ENCODE measurements at regions of chr17 and their contacts with region 1.

Region 1: DNA sequence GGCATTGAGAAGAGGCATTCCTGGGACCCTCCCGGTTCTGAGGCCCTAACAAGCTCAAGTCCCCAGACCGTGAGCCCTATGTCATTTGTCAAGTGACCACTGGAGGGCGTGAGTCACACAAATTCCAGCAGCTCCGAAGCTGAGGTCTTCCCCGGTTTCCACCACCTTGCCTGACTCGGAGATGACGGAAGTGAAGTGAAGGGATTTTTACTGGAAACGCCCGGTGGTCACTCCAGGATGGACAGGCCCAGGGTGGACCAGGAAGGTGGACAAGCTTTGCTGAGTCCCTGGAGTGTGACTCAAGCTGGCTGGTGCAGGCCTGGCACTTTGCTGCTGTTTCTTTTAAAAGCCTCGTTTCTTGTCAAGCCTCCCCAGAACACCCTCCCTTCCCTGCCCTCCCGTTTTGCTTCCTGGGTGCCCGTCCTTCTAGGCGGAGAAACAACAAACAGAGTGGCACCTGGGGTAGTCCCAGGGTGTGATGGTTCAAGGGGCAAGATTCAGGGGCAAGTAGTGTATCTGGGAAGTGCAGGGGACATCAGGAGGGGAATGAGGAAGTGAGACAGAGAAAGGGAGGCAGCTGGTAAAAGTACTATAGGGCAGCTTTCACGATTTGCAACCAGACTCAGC is 5.3 kb upstream of the NOS2 start:
- DNase-seq: peak; percentile 90
- H3K4me3 Mint-ChIP-seq: peak overlapping the region; percentile 66
- H3K27ac Mint-ChIP-seq: peak overlapping the region; percentile 68
- H3K4me1 Mint-ChIP-seq: peaks cover 43% of the 10 kb centered on the region
- H3K27me3 Mint-ChIP-seq: no peaks in the 10 kb centered on the region

Region 2: GRCh38 chr17:27473748-27474609 is 331.7 kb before region 1 on chr17:
- CTCF ChIA-PET with region 1: no interaction called
- POLR2A ChIA-PET with region 1: no interaction called
- intact Hi-C with region 1: loop called (anchors 5 kb)
- DNase-seq: peak; percentile 93
- H3K4me3 Mint-ChIP-seq: peak overlapping the region; percentile 42
- H3K27ac Mint-ChIP-seq: peak overlapping the region; percentile 98
- H3K4me1 Mint-ChIP-seq: peaks cover 94% of the 10 kb centered on the region
- H3K27me3 Mint-ChIP-seq: no peaks in the 10 kb centered on the region

Region 3: GRCh38 chr17:27552469-27552779 is 253.2 kb before region 1 on chr17:
- CTCF ChIA-PET with region 1: no interaction called
- POLR2A ChIA-PET with region 1: no interaction called
- intact Hi-C with region 1: no loop called
- DNase-seq: peak; percentile 36
- H3K4me3 Mint-ChIP-seq: no peak overlapping the region
- H3K27ac Mint-ChIP-seq: no peak overlapping the region
- H3K4me1 Mint-ChIP-seq: peaks cover 23% of the 10 kb centered on the region
- H3K27me3 Mint-ChIP-seq: no peaks in the 10 kb centered on the region

Region 4: DNA sequence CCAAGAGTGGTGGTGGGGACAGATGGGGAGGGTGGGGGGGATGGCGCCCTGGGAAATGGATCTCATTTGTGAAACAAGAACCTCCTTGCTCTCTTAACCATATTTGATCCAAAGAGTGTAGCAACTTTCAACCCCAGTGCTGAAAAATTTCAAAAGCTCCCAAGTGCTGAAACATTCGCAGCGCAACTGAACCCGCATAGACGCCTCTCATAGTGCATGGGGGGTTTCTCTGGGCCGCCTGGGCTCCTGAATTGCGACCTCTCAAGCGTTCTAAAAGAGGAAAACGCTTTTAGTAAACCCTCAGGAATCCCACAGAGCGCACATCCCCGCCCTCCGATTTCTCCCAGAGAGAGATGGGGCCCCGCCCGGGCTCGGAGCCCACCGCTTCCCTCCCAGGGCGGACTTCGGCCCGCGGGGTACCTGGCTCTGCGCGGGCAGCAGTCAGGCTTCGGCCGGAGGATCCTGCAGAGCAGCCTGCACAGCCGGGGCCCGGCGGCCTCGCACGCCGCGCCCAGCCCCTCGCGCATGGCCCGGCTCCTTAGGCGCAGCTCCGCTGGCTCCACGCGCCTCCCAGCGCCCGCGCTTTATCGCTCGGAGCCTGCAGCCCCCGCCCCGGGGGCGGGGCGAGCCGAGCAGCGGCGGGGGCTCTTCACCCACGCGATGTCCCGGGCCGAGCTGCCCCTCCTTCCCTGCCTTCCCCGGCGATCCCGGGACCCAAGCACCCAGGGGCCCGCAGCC is 12.3 kb before region 1 on chr17:
- CTCF ChIA-PET with region 1: interaction called, 24 read pairs
- POLR2A ChIA-PET with region 1: interaction called, 3 read pairs
- intact Hi-C with region 1: no loop called
- DNase-seq: no peak
- H3K4me3 Mint-ChIP-seq: no peak overlapping the region
- H3K27ac Mint-ChIP-seq: no peak overlapping the region
- H3K4me1 Mint-ChIP-seq: peaks cover 4% of the 10 kb centered on the region
- H3K27me3 Mint-ChIP-seq: peaks cover 53% of the 10 kb centered on the region

Region 5: GRCh38 chr17:27846042-27846655 is 40.5 kb after region 1 on chr17:
- CTCF ChIA-PET with region 1: interaction called, 23 read pairs
- POLR2A ChIA-PET with region 1: interaction called, 5 read pairs
- intact Hi-C with region 1: loop called (anchors 2 kb)
- DNase-seq: peak; percentile 41
- H3K4me3 Mint-ChIP-seq: peak overlapping the region; percentile 60
- H3K27ac Mint-ChIP-seq: peak overlapping the region; percentile 64
- H3K4me1 Mint-ChIP-seq: peaks cover 17% of the 10 kb centered on the region
- H3K27me3 Mint-ChIP-seq: no peaks in the 10 kb centered on the region

Region 6: GRCh38 chr17:27879987-27880608 is 74.5 kb after region 1 on chr17:
- CTCF ChIA-PET with region 1: interaction called, 554 read pairs
- POLR2A ChIA-PET with region 1: interaction called, 7 read pairs
- intact Hi-C with region 1: loop called (anchors 1 kb)
- DNase-seq: peak; percentile 84
- H3K4me3 Mint-ChIP-seq: no peak overlapping the region
- H3K27ac Mint-ChIP-seq: no peak overlapping the region
- H3K4me1 Mint-ChIP-seq: peaks cover 16% of the 10 kb centered on the region
- H3K27me3 Mint-ChIP-seq: no peaks in the 10 kb centered on the region

Region 7: GRCh38 chr17:27950995-27951394 is 145.4 kb after region 1 on chr17:
- CTCF ChIA-PET with region 1: no interaction called
- POLR2A ChIA-PET with region 1: no interaction called
- intact Hi-C with region 1: no loop called
- DNase-seq: no peak
- H3K4me3 Mint-ChIP-seq: no peak overlapping the region
- H3K27ac Mint-ChIP-seq: no peak overlapping the region
- H3K4me1 Mint-ChIP-seq: no peaks in the 10 kb centered on the region
- H3K27me3 Mint-ChIP-seq: peaks cover 5% of the 10 kb centered on the region

Region 8: GRCh38 chr17:28057731-28058279 is 252.2 kb after region 1 on chr17:
- CTCF ChIA-PET with region 1: no interaction called
- POLR2A ChIA-PET with region 1: no interaction called
- intact Hi-C with region 1: loop called (anchors 5 kb)
- DNase-seq: no peak
- H3K4me3 Mint-ChIP-seq: no peak overlapping the region
- H3K27ac Mint-ChIP-seq: no peak overlapping the region
- H3K4me1 Mint-ChIP-seq: peaks cover 42% of the 10 kb centered on the region
- H3K27me3 Mint-ChIP-seq: no peaks in the 10 kb centered on the region